Activated CD8-positive, alpha-beta T cell treated with anti-CD3 and anti-CD28 coated beads for 36 hours (primary cell): ENCODE measurements at regions of chr2 and their contacts with region 1.

Region 1: DNA sequence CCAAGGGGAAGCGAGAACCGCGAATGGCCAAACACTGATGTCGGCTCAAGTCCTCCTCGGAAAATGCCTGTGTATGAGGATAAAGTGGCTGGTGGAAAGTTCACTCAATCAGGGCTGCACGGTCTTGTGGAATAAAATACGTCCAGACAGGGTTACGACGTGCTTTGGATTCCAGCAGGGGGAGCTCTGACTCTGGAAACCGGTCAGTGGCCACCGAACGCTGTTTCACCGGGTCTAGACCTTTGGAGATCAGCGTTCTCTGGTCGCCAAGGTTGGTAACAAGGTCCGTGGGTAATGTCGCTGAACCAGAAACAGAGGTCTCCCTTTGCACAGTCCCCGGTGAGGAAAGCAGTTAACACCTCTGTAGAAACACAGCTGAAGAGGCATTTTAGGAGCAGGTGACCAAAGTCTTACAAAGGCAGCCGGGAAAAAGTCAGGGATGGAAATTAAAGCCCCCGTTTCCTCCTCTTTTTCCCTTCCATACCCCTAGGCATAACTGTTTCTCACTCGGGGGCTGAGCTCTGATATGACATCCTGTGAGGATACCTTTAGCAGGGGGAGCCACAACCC is 47.8 kb downstream of the CDCA7 start:
- DNase-seq: peak; percentile 84
- ATAC-seq: peak; percentile 87
- H3K4me3 Mint-ChIP-seq: no peak overlapping the region
- H3K27ac Mint-ChIP-seq: no peak overlapping the region
- H3K4me1 Mint-ChIP-seq: peaks cover 4% of the 10 kb centered on the region
- H3K27me3 Mint-ChIP-seq: peaks cover 34% of the 10 kb centered on the region
- CTCF ChIP-seq: peak; percentile 81

Region 2: DNA sequence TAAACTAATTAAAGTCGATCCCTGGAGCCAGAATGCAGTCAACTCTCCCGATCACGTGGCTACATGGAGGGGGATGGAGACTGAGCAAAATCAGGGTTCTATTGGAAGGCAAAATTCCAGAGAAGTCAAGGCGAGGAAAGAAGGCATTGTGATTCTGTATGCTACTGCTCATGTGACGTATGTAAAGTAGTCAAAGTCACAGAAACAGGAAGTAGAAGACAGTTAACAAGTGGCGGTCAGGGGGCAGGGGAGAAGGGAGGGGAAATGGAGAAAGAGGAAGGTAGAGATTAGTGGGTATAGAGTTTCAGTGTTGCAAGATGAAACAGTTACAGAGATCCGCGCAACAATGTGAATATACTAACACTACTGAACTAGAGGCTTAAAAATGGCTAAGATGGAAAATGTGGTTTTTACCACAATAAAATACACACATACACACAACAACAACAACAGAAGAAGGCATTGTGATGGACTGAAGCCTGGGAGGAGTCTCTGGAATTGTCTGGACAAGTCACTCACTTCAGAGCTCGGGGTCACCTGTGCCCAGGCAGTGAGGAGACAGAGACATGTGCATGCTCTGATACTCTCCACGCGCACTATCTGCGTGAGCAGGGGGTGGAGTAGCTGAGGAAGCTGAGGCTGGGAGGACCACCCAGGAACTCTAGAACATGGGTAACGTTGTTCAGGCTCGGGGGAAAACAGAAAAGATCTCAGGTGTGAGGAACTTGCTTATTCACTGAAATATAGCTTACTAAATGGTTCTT is 137.7 kb before region 1 on chr2:
- CTCF ChIA-PET with region 1: no interaction called
- POLR2A ChIA-PET with region 1: no interaction called
- intact Hi-C with region 1: no loop called
- DNase-seq: peak; percentile 63
- ATAC-seq: peak; percentile 97
- H3K4me3 Mint-ChIP-seq: peak overlapping the region; percentile 37
- H3K27ac Mint-ChIP-seq: peak overlapping the region; percentile 84
- H3K4me1 Mint-ChIP-seq: peaks cover 15% of the 10 kb centered on the region
- H3K27me3 Mint-ChIP-seq: no peaks in the 10 kb centered on the region
- CTCF ChIP-seq: no peak

Region 3: GRCh38 chr2:173568054-173568453 is 165.6 kb after region 1 on chr2:
- CTCF ChIA-PET with region 1: interaction called, 14 read pairs
- POLR2A ChIA-PET with region 1: no interaction called
- intact Hi-C with region 1: no loop called
- DNase-seq: peak; percentile 39
- ATAC-seq: no peak
- H3K4me3 Mint-ChIP-seq: no peak overlapping the region
- H3K27ac Mint-ChIP-seq: no peak overlapping the region
- H3K4me1 Mint-ChIP-seq: peaks cover 2% of the 10 kb centered on the region
- H3K27me3 Mint-ChIP-seq: peaks cover 17% of the 10 kb centered on the region
- CTCF ChIP-seq: peak; percentile 19